Activated CD4-positive, alpha-beta T cell treated with anti-CD3 and anti-CD28 coated beads, Interleukin-2, amount 10 ng/mL, durations not matched to agents 24 days and 14 days (primary cell): ENCODE measurements at regions of chr18 and their contacts with region 1.

Region 1: GRCh38 chr18:44799907-44800421 is 119.3 kb downstream of the SETBP1 start:
- DNase-seq: peak; percentile 56
- H3K4me3 Mint-ChIP-seq: peak overlapping the region; percentile 58
- H3K27ac Mint-ChIP-seq: peak overlapping the region; percentile 18
- H3K4me1 Mint-ChIP-seq: peaks cover 59% of the 10 kb centered on the region
- H3K27me3 Mint-ChIP-seq: no peaks in the 10 kb centered on the region

Region 2: GRCh38 chr18:44786688-44787087 is 13.3 kb before region 1 on chr18:
- intact Hi-C with region 1: no loop called
- DNase-seq: no peak
- H3K4me3 Mint-ChIP-seq: no peak overlapping the region
- H3K27ac Mint-ChIP-seq: no peak overlapping the region
- H3K4me1 Mint-ChIP-seq: peaks cover 9% of the 10 kb centered on the region
- H3K27me3 Mint-ChIP-seq: peaks cover 21% of the 10 kb centered on the region

Region 3: DNA sequence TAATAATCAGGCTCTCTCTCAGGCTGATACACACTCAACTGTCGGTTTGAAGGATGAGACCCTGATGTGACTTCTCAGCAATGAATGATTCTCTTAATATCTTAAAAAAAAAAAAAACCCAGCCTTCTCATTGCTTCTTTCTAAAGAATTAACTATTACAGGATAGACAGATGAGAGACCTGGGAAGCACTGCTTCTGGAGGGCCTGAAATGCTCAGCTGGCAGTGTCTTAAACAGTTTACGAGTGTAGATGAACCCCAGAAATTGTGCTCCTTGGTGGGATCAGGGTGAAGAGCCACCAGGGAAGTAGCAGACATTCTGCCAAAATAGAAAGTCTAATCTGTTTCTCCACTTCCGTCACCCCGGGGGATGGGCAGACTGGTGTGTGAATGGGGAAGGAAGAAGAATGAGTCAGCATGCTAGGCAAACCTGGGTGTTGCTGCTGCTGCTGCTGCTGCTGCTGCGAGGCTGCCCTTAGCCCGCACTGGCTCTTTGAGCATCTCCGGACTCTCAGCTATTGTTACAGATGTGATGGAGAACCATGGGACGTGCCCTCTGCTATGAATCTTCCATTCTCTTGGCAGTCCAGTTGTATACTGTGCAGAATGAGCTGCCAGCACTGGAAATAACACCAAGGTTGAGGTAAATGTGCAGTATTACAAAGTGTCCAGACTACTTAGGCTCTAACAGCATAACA is 39.2 kb after region 1 on chr18:
- intact Hi-C with region 1: loop called (anchors 5 kb)
- DNase-seq: peak; percentile 92
- H3K4me3 Mint-ChIP-seq: peak overlapping the region; percentile 22
- H3K27ac Mint-ChIP-seq: peak overlapping the region; percentile 9
- H3K4me1 Mint-ChIP-seq: peaks cover 32% of the 10 kb centered on the region
- H3K27me3 Mint-ChIP-seq: no peaks in the 10 kb centered on the region

Region 4: GRCh38 chr18:44887227-44887631 is 87.3 kb after region 1 on chr18:
- intact Hi-C with region 1: loop called (anchors 1 kb)
- DNase-seq: peak; percentile 73
- H3K4me3 Mint-ChIP-seq: peak overlapping the region; percentile 59
- H3K27ac Mint-ChIP-seq: peak overlapping the region; percentile 93
- H3K4me1 Mint-ChIP-seq: peaks cover 27% of the 10 kb centered on the region
- H3K27me3 Mint-ChIP-seq: peaks cover 2% of the 10 kb centered on the region

Region 5: DNA sequence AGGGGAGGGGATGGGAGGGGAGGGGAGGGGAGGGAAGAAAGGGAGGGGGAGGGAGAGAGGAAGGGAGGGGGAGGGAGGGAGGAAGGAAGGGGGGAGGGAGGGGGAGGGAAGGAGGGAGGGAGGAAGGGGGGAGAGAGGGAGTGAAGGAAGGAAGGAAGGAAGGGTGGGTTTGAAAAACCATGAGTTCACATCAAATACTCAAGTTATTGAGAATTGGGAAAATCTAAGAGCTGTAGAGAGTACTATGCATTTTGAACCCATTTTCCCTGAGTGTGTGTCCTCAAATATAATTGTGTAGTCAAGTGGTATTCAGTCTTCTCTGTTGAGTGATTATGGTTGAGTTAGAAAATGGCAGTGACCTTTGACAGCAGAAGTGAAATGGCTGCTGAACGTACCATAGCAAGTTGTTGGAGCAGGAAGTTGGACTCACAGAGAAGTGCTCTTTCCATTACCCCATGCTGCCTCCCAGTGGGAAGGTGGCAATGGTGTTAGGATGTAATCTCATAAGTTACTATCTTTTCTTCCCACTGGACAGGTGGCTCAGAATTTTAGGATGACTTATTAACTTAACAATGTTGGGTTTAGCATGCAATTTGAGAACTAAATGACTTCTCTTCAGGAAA is 95.3 kb after region 1 on chr18:
- intact Hi-C with region 1: loop called (anchors 1 kb)
- DNase-seq: peak; percentile 73
- H3K4me3 Mint-ChIP-seq: no peak overlapping the region
- H3K27ac Mint-ChIP-seq: peak overlapping the region; percentile 53
- H3K4me1 Mint-ChIP-seq: peaks cover 41% of the 10 kb centered on the region
- H3K27me3 Mint-ChIP-seq: peaks cover 6% of the 10 kb centered on the region

Region 6: DNA sequence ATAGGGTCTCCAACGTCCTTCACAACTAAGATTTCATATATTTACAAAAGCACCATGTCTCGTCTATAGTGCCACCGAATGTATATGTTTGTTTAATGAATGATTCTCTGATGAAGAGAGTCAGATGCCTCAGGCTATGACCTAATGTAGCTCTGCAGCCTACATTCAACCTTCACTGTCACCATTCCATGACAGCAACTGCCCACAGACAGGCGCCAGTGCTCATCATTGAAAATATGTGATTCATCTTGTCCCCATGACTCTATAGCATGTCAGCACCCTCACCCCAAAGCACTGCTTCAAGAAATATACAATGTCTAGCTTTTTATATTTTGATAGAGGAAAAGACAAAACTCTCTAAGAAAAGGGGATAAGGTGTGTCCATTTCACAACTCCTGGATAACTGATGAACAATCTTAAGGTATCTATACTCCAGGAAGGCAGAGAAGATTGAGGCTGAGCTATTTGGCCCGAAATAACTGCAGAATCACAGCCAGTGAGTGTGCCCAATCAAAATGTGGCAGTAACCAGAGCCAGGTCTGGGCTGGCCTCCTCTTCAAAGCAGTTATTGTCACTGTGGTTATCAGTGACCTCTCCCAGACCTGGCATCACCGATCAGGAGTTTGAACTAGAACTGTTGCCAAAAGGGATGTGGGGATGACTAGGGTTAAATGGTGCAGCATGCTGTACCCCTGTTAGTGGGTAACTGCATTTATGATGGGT is 127.3 kb after region 1 on chr18:
- intact Hi-C with region 1: no loop called
- DNase-seq: no peak
- H3K4me3 Mint-ChIP-seq: no peak overlapping the region
- H3K27ac Mint-ChIP-seq: no peak overlapping the region
- H3K4me1 Mint-ChIP-seq: peaks cover 2% of the 10 kb centered on the region
- H3K27me3 Mint-ChIP-seq: peaks cover 9% of the 10 kb centered on the region